ENCODE measurements at regions of chr6 and their contacts with region 1.

Region 1: DNA sequence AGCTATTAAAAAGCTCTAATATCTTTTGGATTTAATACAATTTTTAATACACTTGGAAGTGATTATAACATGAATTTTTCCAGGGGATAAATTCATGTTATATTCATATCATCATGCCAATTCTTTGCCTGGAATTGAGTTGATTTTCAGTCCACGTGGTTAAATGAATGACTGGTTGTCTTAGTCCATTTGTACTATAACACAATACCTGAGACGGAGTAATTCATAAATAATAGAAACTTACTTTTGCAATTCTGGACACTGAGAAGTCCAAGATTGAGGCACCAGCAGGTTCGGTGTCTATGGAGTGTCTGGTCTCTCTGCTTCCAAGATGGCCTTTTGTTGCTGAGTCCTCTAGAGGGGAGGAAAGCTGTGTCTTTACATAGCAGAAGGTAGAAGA is 66.2 kb upstream of the TRDN start:
- DNase-seq: no peak
- ATAC-seq: no peak
- H3K4me3 ChIP-seq: no peak overlapping the region
- H3K27ac ChIP-seq: no peak overlapping the region
- H3K4me1 ChIP-seq: no peaks in the 10 kb centered on the region
- H3K27me3 ChIP-seq: no peaks in the 10 kb centered on the region
- CTCF ChIP-seq: no peak

Region 2: GRCh38 chr6:123640567-123641187 is 62.3 kb before region 1 on chr6:
- intact Hi-C with region 1: loop called in 1 of 2 experiments (anchors 10 kb)
- DNase-seq: no peak
- ATAC-seq: peak; percentile 65 to 78 (median 76)
- H3K4me3 ChIP-seq: peak overlapping the region; percentile 73
- H3K27ac ChIP-seq: peak overlapping the region; percentile 96
- H3K4me1 ChIP-seq: peaks cover 33% of the 10 kb centered on the region
- H3K27me3 ChIP-seq: no peaks in the 10 kb centered on the region
- CTCF ChIP-seq: no peak

Measured in psoas muscle (tissue), 8 donors.